HCT116 (cell line): ENCODE measurements at regions of chr3 and their contacts with region 1.

Region 1: GRCh38 chr3:131026321-131027178 is at the starts of genes ASTE1 and NEK11:
- DNase-seq: peak; percentile 49
- ATAC-seq: peak; percentile 95
- H3K4me3 ChIP-seq: peak within 1 kb of the TSS; percentile 59 to 64
- H3K27ac ChIP-seq: peak within 1 kb of the TSS; percentile 64
- H3K4me1 ChIP-seq: peaks cover 11 to 16% of the 10 kb centered on the region in 2 experiments; a peak in 3 of 4 replicates
- H3K27me3 ChIP-seq: no peaks in the 10 kb centered on the region
- CTCF ChIP-seq: no peak
- POLR2A ChIP-seq: peak; percentile 36
- RAD21 ChIP-seq: no peak
- total RNA-seq, gene ASTE1: 2.4 TPM
- total RNA-seq, gene NEK11: 3.1 TPM

Region 2: GRCh38 chr3:131406274-131406673 is 379.7 kb after region 1 on chr3:
- CTCF ChIA-PET with region 1: no interaction called
- POLR2A ChIA-PET with region 1: no interaction called
- RAD21 ChIA-PET with region 1: no interaction called
- intact Hi-C with region 1: no loop called
- DNase-seq: no peak
- ATAC-seq: no peak
- H3K4me3 ChIP-seq: no peak overlapping the region
- H3K27ac ChIP-seq: no peak overlapping the region
- H3K4me1 ChIP-seq: peaks cover 0 to 7% of the 10 kb centered on the region in 2 experiments; a peak in 2 of 4 replicates
- H3K27me3 ChIP-seq: no peaks in the 10 kb centered on the region
- CTCF ChIP-seq: no peak
- POLR2A ChIP-seq: no peak
- RAD21 ChIP-seq: no peak

Region 3: GRCh38 chr3:131502530-131503245 is 476.1 kb after region 1 on chr3 and contains the start of gene MRPL3:
- CTCF ChIA-PET with region 1: no interaction called
- POLR2A ChIA-PET with region 1: no interaction called
- RAD21 ChIA-PET with region 1: no interaction called
- intact Hi-C with region 1: loop called (anchors 5 kb)
- DNase-seq: peak; percentile 79
- ATAC-seq: peak; percentile 93
- H3K4me3 ChIP-seq: peak within 1 kb of the TSS; percentile 91 to 97
- H3K27ac ChIP-seq: peak within 1 kb of the TSS; percentile 60
- H3K4me1 ChIP-seq: peaks cover 8 to 18% of the 10 kb centered on the region in 2 experiments; a peak in 3 of 4 replicates
- H3K27me3 ChIP-seq: 0 out of 2 replicates have a peak, but pooled peaks cover 3% of the 10 kb centered on the region
- CTCF ChIP-seq: no peak
- POLR2A ChIP-seq: peak; percentile 44
- RAD21 ChIP-seq: no peak
- total RNA-seq, gene MRPL3: 142 TPM